Activated naive CD8-positive, alpha-beta T cell treated with anti-CD3 and anti-CD28 coated beads, Interleukin-2, amount 10 ng/mL, durations not matched to agents 7 days and 5 days (primary cell): ENCODE measurements at regions of chr3 and their contacts with region 1.

Region 1: DNA sequence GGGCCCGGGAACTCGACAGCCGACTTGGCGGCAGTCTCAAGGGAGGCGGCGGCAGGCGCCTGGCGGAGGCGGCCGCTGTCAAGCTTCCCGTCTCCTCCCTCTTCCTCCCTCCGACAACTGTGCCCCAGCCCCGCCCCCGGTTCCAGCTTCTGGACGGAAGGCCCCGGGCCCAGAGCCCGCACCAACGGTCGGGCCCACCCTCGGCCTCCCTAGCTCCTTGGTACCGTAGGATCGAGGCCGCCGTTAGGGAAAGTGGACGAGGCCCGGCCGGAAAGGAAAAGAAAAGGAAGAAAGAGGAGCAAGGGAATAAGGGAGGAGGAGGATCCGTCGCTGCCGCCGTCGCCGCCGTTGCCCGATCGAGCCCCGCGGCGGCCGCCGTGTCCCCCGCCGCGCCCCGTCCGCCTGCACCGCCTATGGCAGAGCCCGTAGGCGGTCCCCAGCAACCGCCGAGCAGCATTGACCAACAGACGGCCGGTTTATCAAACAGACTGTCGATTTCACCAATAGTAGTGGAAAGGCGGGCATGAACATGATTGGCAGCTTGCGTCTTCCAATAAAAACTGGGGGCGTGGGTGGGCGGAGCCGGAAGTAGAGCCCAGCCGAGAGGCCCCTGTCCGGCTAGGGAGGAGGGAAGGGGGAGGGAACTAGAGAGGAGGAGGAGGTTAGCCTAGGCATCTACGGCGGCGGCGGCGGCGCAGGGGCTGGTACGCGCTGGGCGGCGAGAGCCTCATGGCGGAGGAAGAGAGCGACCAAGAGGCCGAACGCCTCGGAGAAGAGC is at the starts of genes CGGBP1 and ZNF654:
- DNase-seq: peak; percentile 96
- ATAC-seq: peak; percentile 96
- H3K4me3 Mint-ChIP-seq: peak within 1 kb of the TSS; percentile 97
- H3K27ac Mint-ChIP-seq: peak within 1 kb of the TSS; percentile 94
- H3K4me1 Mint-ChIP-seq: peaks cover 28% of the 10 kb centered on the region
- H3K27me3 Mint-ChIP-seq: no peaks in the 10 kb centered on the region
- total RNA-seq, gene CGGBP1: 106 to 111 TPM
- total RNA-seq, gene ZNF654: 23.4 to 27.5 TPM

Region 2: DNA sequence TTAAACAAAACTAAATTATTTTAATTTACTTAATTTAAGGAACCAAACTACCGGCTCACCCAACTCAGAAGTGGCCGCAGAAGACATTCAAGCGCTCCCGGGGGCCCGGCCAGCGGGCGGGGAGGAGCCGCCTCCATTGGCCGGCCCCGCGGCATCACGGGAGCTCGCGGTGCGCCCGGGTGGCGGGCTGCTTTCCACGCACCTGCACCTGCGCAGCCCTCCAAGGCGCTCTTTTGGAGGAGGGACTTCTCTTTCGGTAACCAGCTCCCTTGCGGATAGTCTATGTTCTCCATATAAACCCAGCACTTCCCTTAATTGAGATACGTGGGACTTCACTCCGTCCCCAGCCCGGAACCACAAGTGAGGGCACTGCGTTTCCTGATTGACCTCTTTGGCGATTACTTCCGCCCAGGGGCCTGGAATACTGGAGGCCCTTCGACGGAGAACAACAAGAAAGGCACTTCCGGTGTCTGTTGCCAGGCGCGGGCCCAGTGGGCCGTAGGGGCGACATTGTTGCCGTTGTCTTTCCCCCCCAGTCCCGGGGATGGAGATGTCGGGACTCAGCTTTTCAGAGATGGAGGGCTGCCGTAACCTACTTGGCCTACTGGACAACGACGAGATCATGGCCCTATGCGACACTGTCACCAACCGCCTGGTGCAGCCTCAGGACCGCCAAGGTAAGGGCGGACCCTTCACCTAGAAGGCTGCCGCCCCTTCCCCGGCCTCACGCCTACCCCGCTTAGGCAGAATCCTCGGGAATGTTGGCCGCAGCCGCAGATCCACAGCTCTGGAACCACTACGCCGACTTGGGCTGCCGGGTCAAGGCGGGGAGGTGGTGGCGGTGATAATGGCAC is 91.0 kb after region 1 on chr3 and contains the start of gene C3orf38:
- POLR2A ChIA-PET with region 1: interaction called, 65 read pairs
- DNase-seq: peak; percentile 89
- ATAC-seq: peak; percentile 93
- H3K4me3 Mint-ChIP-seq: peak within 1 kb of the TSS; percentile 96
- H3K27ac Mint-ChIP-seq: peak within 1 kb of the TSS; percentile 98
- H3K4me1 Mint-ChIP-seq: peaks cover 28% of the 10 kb centered on the region
- H3K27me3 Mint-ChIP-seq: no peaks in the 10 kb centered on the region
- total RNA-seq, gene C3orf38: 33.2 to 35.2 TPM